Dendritic cell treated with granulocyte-macrophage colony-stimulating factor and Interleukin-4, amounts not matched to agents 40 ng/mL and 50 ng/mL, for 4 days (primary cell): ENCODE measurements at regions of chr20 and their contacts with region 1.

Region 1: DNA sequence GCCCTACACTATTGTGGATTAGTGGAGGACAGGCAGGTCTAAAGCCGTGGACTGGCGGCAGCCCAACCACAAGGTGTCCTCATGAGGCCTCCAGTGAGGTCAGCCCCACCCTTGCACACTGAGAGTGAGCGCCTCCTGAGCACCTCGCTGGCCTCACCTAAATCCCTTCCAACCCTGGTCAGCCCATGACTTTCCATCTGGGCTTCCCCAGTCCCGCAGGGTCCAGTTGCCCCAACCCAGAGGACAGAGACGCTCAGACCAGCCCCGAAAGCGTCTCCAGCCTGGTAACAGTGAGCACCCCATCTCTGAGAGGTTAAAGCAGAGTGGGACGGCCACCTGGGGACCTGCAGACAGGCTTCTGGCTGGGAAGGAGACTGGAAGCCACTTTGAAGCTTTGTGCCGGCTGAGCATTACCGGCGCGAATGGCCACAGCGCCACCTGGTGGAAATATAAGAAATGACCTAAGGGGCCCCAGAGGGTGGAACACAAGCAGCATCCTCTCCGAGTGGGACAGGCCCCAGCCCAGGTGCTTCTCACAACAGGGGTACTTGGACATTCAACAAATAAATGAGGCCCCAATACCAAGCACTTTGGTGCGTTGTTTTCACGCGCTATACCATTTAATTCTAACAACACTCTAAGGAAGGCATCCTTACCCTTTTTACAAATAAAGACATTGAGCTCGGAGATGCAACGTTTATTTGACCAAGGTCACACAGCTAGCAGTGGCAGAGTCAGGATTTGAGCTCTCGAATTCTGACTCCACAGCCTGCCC is 65.7 kb upstream of the TOP1 start:
- H3K4me3 Mint-ChIP-seq: no peak overlapping the region
- H3K27ac Mint-ChIP-seq: no peak overlapping the region
- H3K4me1 Mint-ChIP-seq: peaks cover 14% of the 10 kb centered on the region
- H3K27me3 Mint-ChIP-seq: peaks cover 3% of the 10 kb centered on the region

Region 2: GRCh38 chr20:39112178-39112743 is 1850.7 kb before region 1 on chr20:
- intact Hi-C with region 1: loop called (anchors 10 kb)
- H3K4me3 Mint-ChIP-seq: no peak overlapping the region
- H3K27ac Mint-ChIP-seq: no peak overlapping the region
- H3K4me1 Mint-ChIP-seq: no peaks in the 10 kb centered on the region
- H3K27me3 Mint-ChIP-seq: peaks cover 27% of the 10 kb centered on the region

Region 3: DNA sequence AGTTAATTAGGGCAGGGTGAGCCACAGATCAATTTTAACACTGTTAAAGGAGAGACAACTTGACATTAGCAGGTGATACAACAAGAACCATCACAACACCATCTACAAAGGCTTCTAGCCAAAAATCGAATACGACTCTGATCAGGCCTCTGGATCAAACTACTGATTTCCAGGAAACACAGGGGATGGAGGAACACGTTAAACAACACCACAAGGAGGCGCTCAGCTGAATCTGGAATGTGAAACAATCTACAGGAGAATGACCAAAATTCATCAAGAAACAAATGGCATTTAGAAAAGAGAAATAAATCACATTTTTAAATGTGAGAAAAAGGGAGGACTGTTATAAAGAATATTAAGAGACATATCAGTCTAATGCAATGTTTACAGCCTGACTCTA is 260.4 kb before region 1 on chr20:
- intact Hi-C with region 1: loop called (anchors 5 kb)
- H3K4me3 Mint-ChIP-seq: no peak overlapping the region
- H3K27ac Mint-ChIP-seq: no peak overlapping the region
- H3K4me1 Mint-ChIP-seq: peaks cover 36% of the 10 kb centered on the region
- H3K27me3 Mint-ChIP-seq: peaks cover 27% of the 10 kb centered on the region

Region 4: DNA sequence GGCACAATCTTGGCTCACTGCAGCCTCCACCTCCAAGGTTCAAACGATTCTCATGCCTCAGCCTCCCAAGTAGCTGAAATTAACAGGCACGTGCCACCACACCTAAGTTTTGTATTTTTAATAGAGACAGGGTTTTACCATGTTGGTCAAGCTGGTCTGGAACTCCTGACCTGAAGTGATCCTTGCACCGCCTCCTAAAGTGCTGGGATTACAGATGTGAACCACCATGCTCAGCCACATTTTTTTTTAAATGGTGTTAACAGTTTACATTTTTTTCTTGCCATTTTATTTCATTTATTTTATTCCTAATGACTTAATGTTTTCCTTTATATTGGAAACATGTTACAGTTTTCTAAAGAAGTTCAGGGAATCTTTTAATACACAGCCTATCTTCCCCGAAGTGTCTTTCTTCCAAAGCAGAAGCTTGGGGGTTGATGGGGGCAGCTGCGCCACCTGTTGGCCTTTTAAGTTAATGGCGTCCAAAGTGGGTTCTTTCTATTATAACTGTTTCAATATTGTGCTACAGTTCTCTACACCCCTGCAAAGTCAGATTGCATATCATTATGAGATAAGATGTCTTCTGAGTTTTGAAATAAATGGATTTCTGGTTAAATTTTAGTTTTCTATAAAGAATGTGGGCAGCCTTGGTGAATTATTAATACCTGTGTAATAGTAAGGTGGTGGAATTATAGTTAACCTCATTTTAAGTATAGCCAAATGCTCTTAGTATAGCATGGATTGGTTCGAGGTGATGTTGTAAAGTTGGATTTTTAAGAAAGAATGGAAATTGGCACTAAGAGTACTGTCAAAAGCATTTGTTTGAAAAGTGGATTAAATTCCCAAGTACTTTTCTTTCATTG is 132.4 kb after region 1 on chr20:
- intact Hi-C with region 1: loop called (anchors 1 kb)
- H3K4me3 Mint-ChIP-seq: no peak overlapping the region
- H3K27ac Mint-ChIP-seq: no peak overlapping the region
- H3K4me1 Mint-ChIP-seq: no peaks in the 10 kb centered on the region
- H3K27me3 Mint-ChIP-seq: no peaks in the 10 kb centered on the region

Region 5: DNA sequence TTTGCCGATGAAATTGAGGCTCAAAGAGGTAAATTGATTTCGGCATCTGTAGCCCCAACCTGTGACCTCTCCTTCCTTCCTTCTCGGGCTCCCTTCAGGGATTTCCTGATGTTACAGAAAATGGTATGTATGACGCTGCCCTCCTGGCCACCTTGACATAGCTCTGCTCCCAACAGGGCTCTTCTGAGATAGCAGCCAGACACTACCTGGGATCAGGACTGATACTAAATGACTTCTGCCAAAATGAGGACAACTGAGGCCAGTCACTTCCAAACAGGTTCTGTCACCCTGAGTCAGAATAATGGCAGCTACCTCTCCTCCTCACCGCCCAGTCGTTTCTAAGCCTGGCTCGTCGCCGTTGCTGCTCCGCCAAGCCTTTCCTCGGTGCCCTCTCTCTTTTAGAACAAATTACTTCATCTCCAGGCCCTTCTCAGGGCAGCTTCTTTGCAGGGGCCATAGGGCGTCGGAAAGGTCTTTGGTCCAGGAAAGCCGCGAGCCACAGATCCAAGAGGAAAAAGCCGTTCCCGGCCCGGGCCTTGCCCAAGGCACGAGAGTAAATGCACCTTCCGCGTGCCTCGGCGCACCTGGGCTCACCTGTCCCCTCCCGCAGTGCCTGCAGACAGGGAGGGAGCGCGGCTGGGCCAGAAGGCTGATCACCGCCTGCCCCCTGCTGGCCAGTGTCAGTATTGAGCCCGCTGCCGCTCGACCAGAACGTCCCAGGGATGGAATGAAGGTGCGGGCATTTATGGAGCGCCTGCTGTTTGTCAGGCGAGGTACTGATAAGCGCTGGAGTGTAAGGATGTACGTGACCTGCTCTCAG is 376.8 kb after region 1 on chr20:
- intact Hi-C with region 1: loop called (anchors 2 kb)
- H3K4me3 Mint-ChIP-seq: peak overlapping the region; percentile 76
- H3K27ac Mint-ChIP-seq: peak overlapping the region; percentile 61
- H3K4me1 Mint-ChIP-seq: peaks cover 9% of the 10 kb centered on the region
- H3K27me3 Mint-ChIP-seq: peaks cover 51% of the 10 kb centered on the region